Activated B cell treated with CpG ODN at 0.5 μM for 24 hours (primary cell): ENCODE measurements at regions of chr14 and their contacts with region 1.

Region 1: DNA sequence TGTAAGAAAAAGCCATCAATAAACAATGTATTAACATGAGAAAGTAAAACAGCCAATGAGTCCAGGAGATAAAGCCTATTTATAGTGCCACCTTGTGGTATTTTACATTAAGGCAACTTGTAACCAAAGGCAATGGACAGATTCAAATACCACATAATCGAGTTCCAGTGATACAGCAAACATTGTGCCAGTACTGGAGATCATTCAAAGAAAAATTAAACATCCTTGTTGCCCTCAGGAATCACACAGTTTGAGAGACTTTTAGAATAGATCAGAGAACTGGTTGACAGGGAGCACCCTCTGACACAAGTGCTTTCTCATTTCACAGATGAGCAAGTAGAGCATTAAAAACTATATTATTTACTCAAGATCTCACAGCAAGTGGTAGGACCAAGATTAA is 98.1 kb downstream of the DDHD1 start:
- DNase-seq: no peak
- ATAC-seq: peak; percentile 56
- H3K4me3 Mint-ChIP-seq: no peak overlapping the region
- H3K27ac Mint-ChIP-seq: no peak overlapping the region
- H3K4me1 Mint-ChIP-seq: no peaks in the 10 kb centered on the region
- H3K27me3 Mint-ChIP-seq: no peaks in the 10 kb centered on the region
- CTCF ChIP-seq: peak; percentile 86

Region 2: DNA sequence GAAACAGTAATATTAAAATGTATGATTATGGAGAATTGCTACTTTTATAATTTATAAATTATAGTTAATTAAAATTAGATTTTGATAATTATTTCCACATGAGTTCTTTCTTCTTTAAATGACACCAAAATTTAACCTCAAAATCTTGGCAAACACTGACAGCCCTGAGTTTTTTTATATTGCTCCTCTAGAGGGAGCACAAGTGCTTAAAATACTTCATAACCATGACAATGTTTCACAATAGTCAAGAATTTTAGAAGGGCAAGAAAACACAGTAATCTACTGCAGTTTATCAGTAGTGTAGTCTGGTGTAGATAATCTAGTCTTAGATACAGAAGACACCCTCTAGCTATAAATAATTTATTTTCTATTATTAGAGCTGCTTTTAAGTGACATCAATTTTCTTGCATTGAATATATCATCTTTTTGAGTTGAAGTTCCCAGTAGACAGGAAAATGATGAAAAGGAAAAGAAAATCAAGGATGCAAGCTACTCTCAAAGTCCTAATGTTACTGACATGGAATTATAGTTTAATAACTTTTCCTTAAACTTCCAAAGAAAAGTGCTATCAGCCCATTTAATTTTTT is 755.2 kb before region 1 on chr14:
- CTCF ChIA-PET with region 1: interaction called, 4 read pairs
- POLR2A ChIA-PET with region 1: no interaction called
- intact Hi-C with region 1: loop called (anchors 1 kb)
- DNase-seq: no peak
- ATAC-seq: no peak
- H3K4me3 Mint-ChIP-seq: no peak overlapping the region
- H3K27ac Mint-ChIP-seq: no peak overlapping the region
- H3K4me1 Mint-ChIP-seq: no peaks in the 10 kb centered on the region
- H3K27me3 Mint-ChIP-seq: peaks cover 10% of the 10 kb centered on the region
- CTCF ChIP-seq: no peak

Region 3: GRCh38 chr14:52824507-52824906 is 230.5 kb before region 1 on chr14:
- CTCF ChIA-PET with region 1: interaction called, 4 read pairs
- POLR2A ChIA-PET with region 1: no interaction called
- intact Hi-C with region 1: loop called (anchors 1 kb)
- DNase-seq: no peak
- ATAC-seq: no peak
- H3K4me3 Mint-ChIP-seq: no peak overlapping the region
- H3K27ac Mint-ChIP-seq: no peak overlapping the region
- H3K4me1 Mint-ChIP-seq: no peaks in the 10 kb centered on the region
- H3K27me3 Mint-ChIP-seq: peaks cover 2% of the 10 kb centered on the region
- CTCF ChIP-seq: no peak

Region 4: DNA sequence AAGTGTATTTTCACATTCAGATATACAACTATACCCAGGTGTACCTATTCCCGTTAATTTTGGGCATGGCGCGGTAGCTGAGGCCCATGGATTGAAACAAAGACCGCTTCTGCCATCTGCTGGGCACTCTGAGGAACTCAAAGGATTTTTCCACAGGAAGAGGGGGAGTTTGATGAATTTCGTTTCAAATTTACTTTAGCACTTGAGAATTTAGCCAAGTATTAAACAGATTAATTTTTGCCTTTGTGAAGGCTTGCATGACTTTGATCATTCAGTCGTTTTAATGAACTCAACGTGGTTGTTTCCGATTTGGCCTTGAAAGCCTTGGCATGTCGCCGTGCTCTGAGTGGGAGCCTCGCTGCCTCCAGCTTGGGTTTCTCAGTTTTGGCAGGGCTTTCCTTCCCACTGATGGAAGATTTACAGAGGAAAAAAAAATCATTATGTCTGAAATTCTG is 251.3 kb after region 1 on chr14:
- CTCF ChIA-PET with region 1: interaction called, 8 read pairs
- POLR2A ChIA-PET with region 1: no interaction called
- intact Hi-C with region 1: loop called (anchors 10 kb)
- DNase-seq: no peak
- ATAC-seq: peak; percentile 42
- H3K4me3 Mint-ChIP-seq: peak overlapping the region; percentile 30
- H3K27ac Mint-ChIP-seq: no peak overlapping the region
- H3K4me1 Mint-ChIP-seq: peaks cover 17% of the 10 kb centered on the region
- H3K27me3 Mint-ChIP-seq: peaks cover 11% of the 10 kb centered on the region
- CTCF ChIP-seq: peak; percentile 68

Region 5: GRCh38 chr14:54347997-54348611 is 1293.1 kb after region 1 on chr14:
- CTCF ChIA-PET with region 1: interaction called, 4 read pairs
- POLR2A ChIA-PET with region 1: no interaction called
- intact Hi-C with region 1: loop called (anchors 5 kb)
- DNase-seq: no peak
- ATAC-seq: peak; percentile 21
- H3K4me3 Mint-ChIP-seq: no peak overlapping the region
- H3K27ac Mint-ChIP-seq: no peak overlapping the region
- H3K4me1 Mint-ChIP-seq: peaks cover 5% of the 10 kb centered on the region
- H3K27me3 Mint-ChIP-seq: peaks cover 4% of the 10 kb centered on the region
- CTCF ChIP-seq: no peak